ENCODE measurements at regions of chr1 and their contacts with region 1.

Region 1: DNA sequence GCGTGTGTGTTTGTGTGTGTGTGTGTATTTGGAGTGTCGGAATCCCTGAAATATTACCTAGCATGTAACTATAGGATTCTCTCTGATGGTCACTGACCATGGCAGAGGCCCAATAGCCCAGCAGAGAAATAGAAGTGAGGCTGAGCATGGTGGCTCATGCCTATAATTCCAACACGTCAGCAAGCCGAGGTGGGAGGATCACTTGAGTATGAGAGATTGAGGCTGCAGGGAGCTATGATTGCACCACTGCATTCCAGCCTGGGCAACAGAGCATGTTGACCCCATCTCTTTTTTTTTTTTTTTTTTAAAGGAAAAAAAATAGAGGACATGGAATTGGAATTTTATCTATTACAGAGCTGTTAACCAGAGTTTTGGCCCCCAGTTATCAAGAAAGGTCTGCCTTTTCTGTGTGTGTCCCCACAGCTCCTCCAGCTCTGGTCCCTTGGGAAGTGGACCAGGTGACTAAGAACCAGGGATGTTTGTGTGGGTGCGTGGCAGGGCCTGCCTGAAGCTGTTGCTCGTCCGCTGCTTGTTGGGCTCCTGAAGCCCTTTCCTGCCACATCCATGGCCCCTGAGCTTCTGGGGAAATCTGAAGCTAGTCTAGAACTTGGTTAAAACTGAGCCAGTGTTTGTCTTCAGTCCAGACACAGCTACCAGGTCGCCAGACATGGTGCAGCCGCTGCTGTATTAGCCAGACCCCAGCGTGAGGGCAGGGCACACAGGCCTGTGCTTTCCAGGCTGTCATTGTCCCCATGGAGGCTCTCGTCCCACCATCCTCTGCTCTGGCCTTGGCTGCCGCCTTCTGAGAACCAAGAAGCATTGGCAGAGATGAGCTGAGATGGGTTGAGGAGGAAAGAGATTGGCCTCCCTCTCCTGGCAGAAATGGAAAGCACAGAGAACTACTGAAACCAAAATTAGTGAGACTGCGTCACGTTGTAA is 25.5 kb downstream of the CAPN9 start:
- DNase-seq: peak; percentile 57
- H3K4me3 ChIP-seq: no peak overlapping the region
- H3K27ac ChIP-seq: peak overlapping the region; percentile 83
- H3K4me1 ChIP-seq: peaks cover 29% of the 10 kb centered on the region
- H3K27me3 ChIP-seq: no peaks in the 10 kb centered on the region
- CTCF ChIP-seq: peak; percentile 75

Region 2: GRCh38 chr1:230632273-230632873 is 140.4 kb before region 1 on chr1:
- intact Hi-C with region 1: loop called (anchors 10 kb)
- DNase-seq: no peak
- H3K4me3 ChIP-seq: no peak overlapping the region
- H3K27ac ChIP-seq: no peak overlapping the region
- H3K4me1 ChIP-seq: no peaks in the 10 kb centered on the region
- H3K27me3 ChIP-seq: no peaks in the 10 kb centered on the region
- CTCF ChIP-seq: peak; percentile 65

Region 3: GRCh38 chr1:230696722-230697437 is 75.8 kb before region 1 on chr1:
- intact Hi-C with region 1: loop called (anchors 10 kb)
- DNase-seq: no peak
- H3K4me3 ChIP-seq: no peak overlapping the region
- H3K27ac ChIP-seq: no peak overlapping the region
- H3K4me1 ChIP-seq: peaks cover 17% of the 10 kb centered on the region
- H3K27me3 ChIP-seq: peaks cover 3% of the 10 kb centered on the region
- CTCF ChIP-seq: no peak